ENCODE measurements at regions of chr3 and their contacts with region 1.

Region 1: DNA sequence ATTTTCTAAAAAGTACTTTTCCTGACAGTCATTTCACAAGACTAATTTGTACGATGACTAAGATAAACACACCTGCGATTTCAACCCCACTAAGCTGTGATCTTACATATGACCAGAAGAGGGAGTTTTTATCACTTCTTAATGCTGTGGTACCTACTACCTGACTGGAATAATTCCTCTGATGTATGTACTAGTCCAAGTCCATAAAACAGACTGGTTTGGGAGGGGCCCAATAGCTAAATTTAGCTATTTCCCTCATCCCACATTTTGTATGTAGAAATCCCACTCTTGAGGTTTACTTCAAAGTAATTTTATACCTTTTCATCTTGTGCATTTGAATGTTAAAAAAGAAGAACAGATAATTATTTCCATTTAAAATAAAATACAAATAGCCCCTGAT is 49.7 kb upstream of the SCAANT1 start:
- DNase-seq: peak; percentile 39
- H3K4me3 ChIP-seq: no peak overlapping the region
- H3K27ac ChIP-seq: no peak overlapping the region
- H3K4me1 ChIP-seq: peaks cover 17 to 24% of the 10 kb centered on the region in 2 experiments; a peak in 3 of 4 replicates
- H3K27me3 ChIP-seq: no peaks in the 10 kb centered on the region
- CTCF ChIP-seq: peak; percentile 70
- EP300 ChIP-seq: no peak
- RAD21 ChIP-seq: peak; percentile 52

Region 2: GRCh38 chr3:63937661-63938651 is 23.9 kb before region 1 on chr3:
- CTCF ChIA-PET with region 1: interaction called, 13 read pairs
- POLR2A ChIA-PET with region 1: no interaction called
- DNase-seq: no peak
- H3K4me3 ChIP-seq: no peak overlapping the region
- H3K27ac ChIP-seq: no peak overlapping the region
- H3K4me1 ChIP-seq: peaks cover 0 to 2% of the 10 kb centered on the region in 2 experiments; a peak in 1 of 4 replicates
- H3K27me3 ChIP-seq: no peaks in the 10 kb centered on the region
- CTCF ChIP-seq: no peak
- EP300 ChIP-seq: no peak
- RAD21 ChIP-seq: no peak

Region 3: GRCh38 chr3:63945558-63946096 is 16.3 kb before region 1 on chr3:
- CTCF ChIA-PET with region 1: interaction called, 13 read pairs
- POLR2A ChIA-PET with region 1: no interaction called
- DNase-seq: no peak
- H3K4me3 ChIP-seq: no peak overlapping the region
- H3K27ac ChIP-seq: no peak overlapping the region
- H3K4me1 ChIP-seq: peaks cover 0 to 18% of the 10 kb centered on the region in 2 experiments; a peak in 3 of 4 replicates
- H3K27me3 ChIP-seq: no peaks in the 10 kb centered on the region
- CTCF ChIP-seq: no peak
- EP300 ChIP-seq: no peak
- RAD21 ChIP-seq: no peak

Region 4: DNA sequence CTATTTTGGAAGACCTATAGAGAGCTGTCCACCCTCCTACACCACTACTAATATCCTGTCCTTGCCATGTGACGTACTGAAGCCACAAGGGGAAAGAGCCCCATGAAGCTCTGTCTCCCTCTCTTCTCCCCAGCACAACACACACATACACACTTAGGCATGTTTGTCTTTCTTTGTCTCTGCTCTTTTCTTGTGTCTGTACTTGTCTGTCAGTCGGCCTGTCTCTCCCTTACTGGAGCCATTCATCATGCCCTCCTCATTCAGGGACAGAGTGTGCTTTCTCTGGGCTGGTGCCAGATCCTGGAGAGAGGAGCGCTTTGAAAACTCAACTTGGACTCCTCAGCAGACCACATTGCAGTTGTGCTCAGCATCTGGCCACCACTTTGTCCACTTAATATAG is 13.8 kb after region 1 on chr3:
- CTCF ChIA-PET with region 1: interaction called, 16 read pairs
- POLR2A ChIA-PET with region 1: no interaction called
- DNase-seq: no peak
- H3K4me3 ChIP-seq: no peak overlapping the region
- H3K27ac ChIP-seq: no peak overlapping the region
- H3K4me1 ChIP-seq: peaks cover 0 to 14% of the 10 kb centered on the region in 2 experiments; a peak in 2 of 4 replicates
- H3K27me3 ChIP-seq: no peaks in the 10 kb centered on the region
- CTCF ChIP-seq: no peak
- EP300 ChIP-seq: no peak
- RAD21 ChIP-seq: no peak

Region 5: GRCh38 chr3:64501298-64501906 is 539.5 kb after region 1 on chr3:
- CTCF ChIA-PET with region 1: no interaction called
- POLR2A ChIA-PET with region 1: no interaction called
- DNase-seq: no peak
- H3K4me3 ChIP-seq: no peak overlapping the region
- H3K27ac ChIP-seq: no peak overlapping the region
- H3K4me1 ChIP-seq: no peaks in the 10 kb centered on the region; a peak in 1 of 4 replicates
- H3K27me3 ChIP-seq: no peaks in the 10 kb centered on the region
- CTCF ChIP-seq: no peak
- EP300 ChIP-seq: no peak
- RAD21 ChIP-seq: no peak

Measured in SK-N-SH (cell line).